Aorta (tissue), 5 donors: ENCODE measurements at regions of chr18 and their contacts with region 1.

Region 1: DNA sequence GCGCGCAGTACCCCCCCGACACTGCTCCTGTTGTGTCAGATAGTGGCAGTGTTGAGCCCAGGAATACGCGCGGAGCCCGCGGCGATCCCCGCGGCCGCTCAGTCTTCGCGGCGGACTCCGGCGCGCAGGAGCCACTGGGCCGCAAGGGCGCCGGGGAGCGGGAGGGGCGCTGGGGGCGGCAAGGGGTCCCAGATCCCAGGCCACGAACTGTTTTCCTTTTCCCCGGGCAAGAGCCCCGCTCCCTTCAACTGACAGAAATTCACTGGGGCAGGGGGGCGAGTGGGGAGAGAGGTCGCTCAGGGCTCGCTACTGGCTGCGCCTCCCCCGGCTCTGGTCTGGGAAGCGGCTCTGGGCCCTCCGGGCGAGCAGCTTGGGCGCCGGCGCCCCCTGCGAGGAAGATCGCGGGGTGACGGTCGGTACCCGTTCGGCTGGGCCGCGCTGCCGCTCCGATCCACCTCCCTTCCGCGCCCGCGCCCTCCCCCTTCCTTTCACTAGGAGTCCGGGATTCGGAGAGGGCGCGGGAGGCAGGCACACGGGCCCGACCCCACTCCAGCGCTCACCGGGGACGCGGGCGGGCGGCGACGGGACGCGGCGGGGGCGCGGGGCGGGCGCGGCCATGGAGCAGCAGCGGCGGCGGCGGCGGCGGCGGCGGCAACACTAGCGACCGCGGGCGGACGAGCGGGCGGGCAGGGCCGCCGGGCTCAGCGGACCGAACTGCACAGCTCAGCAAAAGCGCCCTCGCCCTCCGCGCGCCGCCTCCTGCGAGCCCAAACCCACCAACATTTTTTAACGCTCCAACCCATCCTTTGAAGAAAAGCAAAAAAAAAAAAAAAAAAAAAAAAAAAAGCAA is 1.4 kb upstream of the SETBP1 start:
- DNase-seq: peak; percentile 92 to 93
- ATAC-seq: peak; percentile 94
- H3K4me3 ChIP-seq: peak overlapping the region; percentile 91 to 98
- H3K27ac ChIP-seq: peak overlapping the region; percentile 78 to 99
- H3K4me1 ChIP-seq: peaks cover 0 to 3% of the 10 kb centered on the region in 2 donors
- H3K27me3 ChIP-seq: no peaks in the 10 kb centered on the region

Region 2: GRCh38 chr18:44130376-44130942 is 548.8 kb before region 1 on chr18:
- intact Hi-C with region 1: loop called in 1 of 2 experiments (anchors 5 kb)
- DNase-seq: no peak
- ATAC-seq: no peak
- H3K4me3 ChIP-seq: no peak overlapping the region
- H3K27ac ChIP-seq: no peak overlapping the region
- H3K4me1 ChIP-seq: no peaks in the 10 kb centered on the region
- H3K27me3 ChIP-seq: no peaks in the 10 kb centered on the region

Region 3: DNA sequence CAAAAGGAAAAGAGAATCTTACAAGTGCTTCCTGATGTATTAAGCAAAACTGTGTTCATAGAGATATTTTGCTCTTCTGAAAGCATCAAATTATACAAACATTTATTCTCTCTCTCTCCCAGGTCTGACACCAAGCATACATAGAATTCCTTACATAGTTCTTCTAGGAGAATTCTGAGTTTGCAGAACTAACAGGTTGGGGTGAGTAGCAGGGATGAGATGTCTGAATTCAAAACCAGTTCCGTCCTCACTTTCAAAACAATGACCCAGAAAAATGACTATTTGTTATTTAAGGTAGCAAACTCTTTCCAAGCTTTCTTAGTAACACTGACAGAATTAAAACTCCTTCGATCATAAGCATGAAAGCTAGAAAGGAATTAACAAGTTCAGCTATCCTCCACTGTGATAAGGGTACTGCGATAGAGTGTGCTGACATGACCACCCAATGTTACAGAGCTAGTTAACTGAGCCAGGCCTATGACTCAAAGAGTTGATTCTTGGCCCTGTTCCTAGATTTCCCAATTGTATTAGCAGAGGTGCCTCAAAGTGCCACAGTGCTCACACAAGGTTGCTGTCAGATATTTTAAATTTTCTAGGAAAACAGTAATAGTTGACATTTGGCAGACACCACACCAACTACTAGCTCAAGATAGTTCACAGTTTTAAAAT is 84.3 kb before region 1 on chr18:
- intact Hi-C with region 1: loop called in 1 of 2 experiments (anchors 5 kb)
- DNase-seq: no peak
- ATAC-seq: peak; percentile 73
- H3K4me3 ChIP-seq: no peak overlapping the region
- H3K27ac ChIP-seq: no peak overlapping the region
- H3K4me1 ChIP-seq: peaks cover 1 to 18% of the 10 kb centered on the region in 2 donors
- H3K27me3 ChIP-seq: no peaks in the 10 kb centered on the region

Region 4: DNA sequence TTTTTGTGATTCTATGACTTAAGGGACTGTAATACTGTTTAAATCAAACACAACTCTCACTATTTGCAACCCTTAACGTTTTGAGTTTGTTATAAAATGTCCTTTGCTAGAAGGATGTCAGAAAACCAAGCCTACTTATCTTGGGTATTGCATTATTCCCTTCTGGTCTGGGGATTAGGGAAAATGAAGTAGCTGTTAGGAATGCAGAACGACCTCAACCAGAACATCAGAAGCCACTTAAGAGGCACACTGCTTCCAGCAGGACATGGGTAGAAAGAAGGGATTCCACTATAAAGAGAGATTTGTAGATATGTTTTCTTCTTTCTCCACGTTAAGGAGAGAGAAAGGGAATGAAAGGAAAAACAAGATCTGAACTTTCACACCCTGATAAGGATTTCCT is 102.6 kb after region 1 on chr18:
- intact Hi-C with region 1: loop called in 1 of 2 experiments (anchors 5 kb)
- DNase-seq: no peak
- ATAC-seq: no peak
- H3K4me3 ChIP-seq: no peak overlapping the region
- H3K27ac ChIP-seq: no peak overlapping the region
- H3K4me1 ChIP-seq: peaks cover 0 to 8% of the 10 kb centered on the region in 2 donors
- H3K27me3 ChIP-seq: no peaks in the 10 kb centered on the region

Region 5: GRCh38 chr18:44803019-44803650 is 123.9 kb after region 1 on chr18:
- intact Hi-C with region 1: no loop called
- DNase-seq: no peak
- ATAC-seq: peak; percentile 91
- H3K4me3 ChIP-seq: no peak overlapping the region
- H3K27ac ChIP-seq: peak overlapping the region; percentile 95 to 100
- H3K4me1 ChIP-seq: peaks cover 2 to 8% of the 10 kb centered on the region in 2 donors
- H3K27me3 ChIP-seq: no peaks in the 10 kb centered on the region

Region 6: DNA sequence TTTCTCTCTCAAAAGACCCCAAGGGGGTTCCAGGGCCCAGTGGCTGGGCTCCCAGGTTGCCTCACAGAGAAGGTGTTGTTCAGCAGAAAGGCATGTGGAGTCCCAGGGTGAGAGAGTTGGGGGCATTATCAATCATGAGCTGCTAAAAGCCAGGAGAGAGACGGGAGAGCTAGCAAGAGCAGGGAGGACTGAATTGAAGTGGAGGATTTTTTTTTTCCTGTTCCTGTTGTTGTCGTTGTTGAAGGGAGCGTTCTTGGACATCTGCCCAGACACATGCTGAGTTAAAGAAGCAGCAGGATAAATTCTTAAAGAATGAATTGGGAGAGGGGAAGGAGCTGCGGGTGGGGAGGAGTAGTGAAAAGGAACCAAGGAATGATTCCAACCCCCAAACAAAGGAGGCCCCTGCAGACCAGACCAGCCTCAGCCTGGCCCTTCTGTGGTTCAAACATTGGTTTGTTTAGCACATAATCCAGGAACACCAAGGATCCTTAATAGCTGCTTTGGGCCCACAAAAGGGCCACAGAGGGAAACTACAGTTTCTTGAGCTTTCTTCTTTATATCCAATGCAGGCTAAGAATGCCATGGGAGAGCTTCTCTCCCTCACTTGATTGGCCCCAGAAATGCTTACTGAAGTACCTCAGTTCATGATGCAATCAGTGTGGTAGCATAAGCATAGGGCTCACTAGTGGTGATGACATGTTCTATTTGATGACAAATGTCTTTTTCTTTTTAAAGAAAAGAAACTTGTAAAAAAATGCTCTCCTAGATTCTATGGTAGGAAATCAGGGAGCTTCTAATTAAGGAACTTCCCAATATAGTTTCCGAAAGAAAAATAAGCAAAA is 147.4 kb after region 1 on chr18:
- intact Hi-C with region 1: loop called in 1 of 2 experiments (anchors 5 kb)
- DNase-seq: peak in 1 of 2 donors; percentile 81
- ATAC-seq: peak; percentile 82
- H3K4me3 ChIP-seq: no peak overlapping the region
- H3K27ac ChIP-seq: peak overlapping the region; percentile 46 to 47
- H3K4me1 ChIP-seq: peaks cover 2 to 3% of the 10 kb centered on the region in 2 donors
- H3K27me3 ChIP-seq: no peaks in the 10 kb centered on the region

Region 7: DNA sequence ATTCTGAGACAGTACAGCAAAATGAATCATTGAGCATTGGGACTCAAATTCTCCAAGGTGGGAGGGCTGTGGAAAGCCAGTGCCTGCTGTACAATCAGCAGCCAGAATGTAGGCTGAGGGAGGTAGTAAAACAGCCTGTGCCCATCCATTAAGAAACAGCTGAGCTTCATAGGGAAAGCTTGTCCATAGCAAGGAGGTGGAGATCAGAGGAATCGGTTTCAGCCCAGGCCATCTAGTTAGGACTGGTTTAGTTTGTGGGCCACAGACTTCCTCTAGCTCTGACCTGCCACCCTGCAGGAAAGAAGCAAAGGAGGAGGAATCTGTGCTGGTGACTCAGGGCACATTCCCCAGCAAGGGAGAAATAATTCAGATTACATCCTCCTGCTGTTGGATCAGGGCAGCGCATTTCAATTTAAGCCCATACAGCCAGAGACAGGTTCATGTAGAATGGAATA is 334.8 kb after region 1 on chr18:
- intact Hi-C with region 1: loop called (anchors 5 kb)
- DNase-seq: peak in 1 of 2 donors; percentile 62
- ATAC-seq: peak; percentile 36
- H3K4me3 ChIP-seq: no peak overlapping the region
- H3K27ac ChIP-seq: peak overlapping the region in 1 of 2 donors; percentile 68
- H3K4me1 ChIP-seq: peaks cover 0 to 8% of the 10 kb centered on the region in 2 donors
- H3K27me3 ChIP-seq: no peaks in the 10 kb centered on the region

Region 8: GRCh38 chr18:45248240-45248903 is 569.1 kb after region 1 on chr18:
- intact Hi-C with region 1: loop called in 1 of 2 experiments (anchors 10 kb)
- DNase-seq: peak in 1 of 2 donors; percentile 61
- ATAC-seq: peak; percentile 76
- H3K4me3 ChIP-seq: no peak overlapping the region
- H3K27ac ChIP-seq: peak overlapping the region; percentile 99 to 100
- H3K4me1 ChIP-seq: peaks cover 13 to 14% of the 10 kb centered on the region in 2 donors
- H3K27me3 ChIP-seq: no peaks in the 10 kb centered on the region